PC-9 (cell line): ENCODE measurements at regions of chr4 and their contacts with region 1.

Region 1: DNA sequence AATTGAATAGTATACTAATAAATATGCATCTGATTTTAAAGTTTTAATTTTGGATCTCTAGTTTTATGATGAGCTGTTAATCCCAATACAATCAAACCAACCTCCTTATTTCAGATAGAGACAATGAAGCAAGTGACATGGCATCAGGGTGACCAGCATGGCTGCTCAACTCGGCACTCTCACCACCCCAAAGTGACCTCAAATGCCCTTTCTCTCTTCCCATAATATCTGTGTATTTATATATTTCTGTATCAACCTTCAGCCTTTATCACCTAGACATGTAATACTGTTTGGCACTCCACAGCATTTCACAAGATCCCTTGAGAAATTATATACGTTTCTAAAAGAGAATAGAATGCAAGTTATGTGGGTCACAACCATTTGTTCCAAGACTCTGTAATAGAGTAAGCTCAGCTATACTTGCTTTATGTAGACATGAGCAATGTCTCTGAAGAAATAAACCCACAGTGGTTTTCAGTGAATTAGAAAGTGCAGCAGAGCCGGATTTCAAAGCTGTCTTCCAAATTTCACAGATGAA is 1623.2 kb upstream of the PABPC4L start:
- DNase-seq: no peak
- H3K4me3 ChIP-seq: no peak overlapping the region
- H3K27ac ChIP-seq: no peak overlapping the region
- H3K4me1 ChIP-seq: no peaks in the 10 kb centered on the region
- H3K27me3 ChIP-seq: no peaks in the 10 kb centered on the region
- CTCF ChIP-seq: no peak

Region 2: GRCh38 chr4:136465691-136466090 is 640.9 kb after region 1 on chr4:
- CTCF ChIA-PET with region 1: interaction called, 13 read pairs
- POLR2A ChIA-PET with region 1: no interaction called
- intact Hi-C with region 1: no loop called
- DNase-seq: no peak
- H3K4me3 ChIP-seq: no peak overlapping the region
- H3K27ac ChIP-seq: no peak overlapping the region
- H3K4me1 ChIP-seq: no peaks in the 10 kb centered on the region
- H3K27me3 ChIP-seq: no peaks in the 10 kb centered on the region
- CTCF ChIP-seq: no peak